GM12878 (cell line): ENCODE measurements at regions of chr17 and their contacts with region 1.

Region 1: GRCh38 chr17:46044286-46044928 is 45.4 kb downstream of the STH start:
- DNase-seq: no peak
- ATAC-seq: peak; percentile 76
- H3K4me3 ChIP-seq: no peak overlapping the region
- H3K27ac ChIP-seq: no peak overlapping the region
- H3K4me1 ChIP-seq: no peaks in the 10 kb centered on the region
- H3K27me3 ChIP-seq: no peaks in the 10 kb centered on the region
- CTCF ChIP-seq: peak; percentile 67 to 80 (median 76)
- EP300 ChIP-seq: no peak
- POLR2A ChIP-seq: no peak
- RAD21 ChIP-seq: peak; percentile 75

Region 2: GRCh38 chr17:45782889-45783592 is 261.4 kb before region 1 on chr17:
- CTCF ChIA-PET with region 1: no interaction called
- POLR2A ChIA-PET with region 1: no interaction called
- RAD21 ChIA-PET with region 1: no interaction called
- SMC1A ChIA-PET with region 1: no interaction called
- in situ Hi-C with region 1: no loop called
- intact Hi-C with region 1: no loop called
- DNase-seq: no peak
- ATAC-seq: no peak
- H3K4me3 ChIP-seq: no peak overlapping the region
- H3K27ac ChIP-seq: no peak overlapping the region
- H3K4me1 ChIP-seq: no peaks in the 10 kb centered on the region
- H3K27me3 ChIP-seq: peaks cover 15 to 18% of the 10 kb centered on the region in 2 experiments
- CTCF ChIP-seq: 0 out of 6 replicates have a peak, but pooled peaks of 1 of the 3 experiments have one; percentile 1
- EP300 ChIP-seq: no peak
- POLR2A ChIP-seq: no peak
- RAD21 ChIP-seq: no peak

Region 3: GRCh38 chr17:45954914-45955313 is 89.5 kb before region 1 on chr17:
- CTCF ChIA-PET with region 1: no interaction called
- POLR2A ChIA-PET with region 1: no interaction called
- RAD21 ChIA-PET with region 1: no interaction called
- SMC1A ChIA-PET with region 1: no interaction called
- in situ Hi-C with region 1: no loop called
- intact Hi-C with region 1: no loop called
- DNase-seq: no peak
- ATAC-seq: no peak
- H3K4me3 ChIP-seq: no peak overlapping the region
- H3K27ac ChIP-seq: no peak overlapping the region
- H3K4me1 ChIP-seq: no peaks in the 10 kb centered on the region
- H3K27me3 ChIP-seq: peaks cover 0 to 3% of the 10 kb centered on the region in 2 experiments; a peak in 3 of 4 replicates
- CTCF ChIP-seq: no peak
- EP300 ChIP-seq: no peak
- POLR2A ChIP-seq: no peak
- RAD21 ChIP-seq: no peak

Region 4: GRCh38 chr17:46002311-46002972 is 42.0 kb before region 1 on chr17:
- CTCF ChIA-PET with region 1: interaction called, 11 read pairs
- POLR2A ChIA-PET with region 1: no interaction called
- RAD21 ChIA-PET with region 1: interaction called, 4 read pairs
- SMC1A ChIA-PET with region 1: interaction called, 12 read pairs
- in situ Hi-C with region 1: no loop called
- intact Hi-C with region 1: loop called (anchors 5 kb)
- DNase-seq: peak; percentile 16
- ATAC-seq: peak; percentile 96
- H3K4me3 ChIP-seq: no peak overlapping the region
- H3K27ac ChIP-seq: no peak overlapping the region
- H3K4me1 ChIP-seq: no peaks in the 10 kb centered on the region
- H3K27me3 ChIP-seq: no peaks in the 10 kb centered on the region
- CTCF ChIP-seq: peak; percentile 86 to 93 (median 87); a peak in 5 of 6 replicates
- EP300 ChIP-seq: no peak
- POLR2A ChIP-seq: no peak
- RAD21 ChIP-seq: peak; percentile 89

Region 5: DNA sequence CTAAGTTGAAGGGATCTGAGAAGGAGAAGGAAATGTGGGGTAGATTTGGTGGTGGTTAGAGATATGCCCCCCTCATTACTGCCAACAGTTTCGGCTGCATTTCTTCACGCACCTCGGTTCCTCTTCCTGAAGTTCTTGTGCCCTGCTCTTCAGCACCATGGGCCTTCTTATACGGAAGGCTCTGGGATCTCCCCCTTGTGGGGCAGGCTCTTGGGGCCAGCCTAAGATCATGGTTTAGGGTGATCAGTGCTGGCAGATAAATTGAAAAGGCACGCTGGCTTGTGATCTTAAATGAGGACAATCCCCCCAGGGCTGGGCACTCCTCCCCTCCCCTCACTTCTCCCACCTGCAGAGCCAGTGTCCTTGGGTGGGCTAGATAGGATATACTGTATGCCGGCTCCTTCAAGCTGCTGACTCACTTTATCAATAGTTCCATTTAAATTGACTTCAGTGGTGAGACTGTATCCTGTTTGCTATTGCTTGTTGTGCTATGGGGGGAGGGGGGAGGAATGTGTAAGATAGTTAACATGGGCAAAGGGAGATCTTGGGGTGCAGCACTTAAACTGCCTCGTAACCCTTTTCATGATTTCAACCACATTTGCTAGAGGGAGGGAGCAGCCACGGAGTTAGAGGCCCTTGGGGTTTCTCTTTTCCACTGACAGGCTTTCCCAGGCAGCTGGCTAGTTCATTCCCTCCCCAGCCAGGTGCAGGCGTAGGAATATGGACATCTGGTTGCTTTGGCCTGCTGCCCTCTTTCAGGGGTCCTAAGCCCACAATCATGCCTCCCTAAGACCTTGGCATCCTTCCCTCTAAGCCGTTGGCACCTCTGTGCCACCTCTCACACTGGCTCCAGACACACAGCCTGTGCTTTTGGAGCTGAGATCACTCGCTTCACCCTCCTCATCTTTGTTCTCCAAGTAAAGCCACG is 17.1 kb before region 1 on chr17:
- CTCF ChIA-PET with region 1: interaction called, 11 read pairs
- POLR2A ChIA-PET with region 1: no interaction called
- RAD21 ChIA-PET with region 1: no interaction called
- SMC1A ChIA-PET with region 1: interaction called, 4 read pairs
- in situ Hi-C with region 1: no loop called
- intact Hi-C with region 1: no loop called
- DNase-seq: no peak
- ATAC-seq: no peak
- H3K4me3 ChIP-seq: no peak overlapping the region
- H3K27ac ChIP-seq: no peak overlapping the region
- H3K4me1 ChIP-seq: peaks cover 11% of the 10 kb centered on the region
- H3K27me3 ChIP-seq: no peaks in the 10 kb centered on the region
- CTCF ChIP-seq: no peak
- EP300 ChIP-seq: no peak
- POLR2A ChIP-seq: peak; percentile 34; the same call in 1 of the 2 replicates
- RAD21 ChIP-seq: no peak

Region 6: GRCh38 chr17:46121841-46122485 is 77.6 kb after region 1 on chr17:
- CTCF ChIA-PET with region 1: interaction called, 13 read pairs
- POLR2A ChIA-PET with region 1: no interaction called
- RAD21 ChIA-PET with region 1: interaction called, 3 read pairs
- SMC1A ChIA-PET with region 1: interaction called, 5 read pairs
- in situ Hi-C with region 1: no loop called
- intact Hi-C with region 1: no loop called
- DNase-seq: peak; percentile 65
- ATAC-seq: peak; percentile 81
- H3K4me3 ChIP-seq: peak overlapping the region; percentile 33
- H3K27ac ChIP-seq: peak overlapping the region; percentile 62
- H3K4me1 ChIP-seq: peaks cover 59% of the 10 kb centered on the region
- H3K27me3 ChIP-seq: no peaks in the 10 kb centered on the region
- CTCF ChIP-seq: no peak
- EP300 ChIP-seq: peak; percentile 33 to 59; a peak in 3 of 4 replicates
- POLR2A ChIP-seq: no peak
- RAD21 ChIP-seq: no peak

Region 7: DNA sequence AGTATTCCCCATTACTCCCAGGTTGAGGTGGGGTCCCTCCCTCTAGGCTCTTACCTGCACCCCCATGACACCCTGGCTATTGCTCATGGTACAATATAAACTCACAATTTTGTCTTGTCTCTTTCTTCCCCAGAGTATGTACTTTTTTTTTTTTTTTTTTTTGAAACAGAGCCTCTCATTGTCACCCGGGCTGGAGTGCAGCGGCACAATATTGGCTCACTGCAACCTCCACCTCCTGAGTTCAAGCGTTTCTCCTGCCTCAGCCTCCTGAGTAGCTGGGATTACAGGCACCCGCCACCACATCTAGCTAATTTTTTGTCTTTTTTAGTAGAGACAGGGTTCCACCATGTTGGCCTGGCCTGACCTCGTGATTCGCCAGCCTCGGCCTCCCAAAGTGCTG is 140.3 kb after region 1 on chr17:
- CTCF ChIA-PET with region 1: interaction called, 120 read pairs
- POLR2A ChIA-PET with region 1: no interaction called
- RAD21 ChIA-PET with region 1: interaction called, 61 read pairs
- SMC1A ChIA-PET with region 1: interaction called, 88 read pairs
- in situ Hi-C with region 1: loop called (anchors 5 kb)
- intact Hi-C with region 1: loop called (anchors 1 kb)
- DNase-seq: no peak
- ATAC-seq: no peak
- H3K4me3 ChIP-seq: no peak overlapping the region
- H3K27ac ChIP-seq: no peak overlapping the region
- H3K4me1 ChIP-seq: peaks cover 37% of the 10 kb centered on the region
- H3K27me3 ChIP-seq: no peaks in the 10 kb centered on the region
- CTCF ChIP-seq: no peak
- EP300 ChIP-seq: no peak
- POLR2A ChIP-seq: no peak
- RAD21 ChIP-seq: no peak

Region 8: DNA sequence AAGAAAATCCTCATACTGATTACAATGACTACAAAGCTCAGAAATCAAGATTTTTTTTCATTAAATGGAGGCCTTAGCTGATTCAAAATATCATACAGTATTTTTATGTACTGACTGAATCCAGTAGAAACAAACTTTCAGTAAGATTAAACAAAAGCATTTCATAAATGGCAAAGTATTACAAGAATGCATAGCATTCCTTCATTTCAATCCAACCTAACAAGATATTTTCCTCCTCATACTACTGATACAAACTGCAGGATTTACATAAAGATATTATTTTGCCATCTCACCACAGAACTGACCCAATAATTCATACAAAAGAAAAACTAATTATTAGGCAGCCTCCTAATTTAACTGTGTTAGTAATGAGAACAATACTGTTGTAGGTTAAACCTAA is 155.0 kb after region 1 on chr17:
- CTCF ChIA-PET with region 1: interaction called, 7 read pairs
- POLR2A ChIA-PET with region 1: no interaction called
- RAD21 ChIA-PET with region 1: no interaction called
- SMC1A ChIA-PET with region 1: interaction called, 11 read pairs
- in situ Hi-C with region 1: no loop called
- intact Hi-C with region 1: no loop called
- DNase-seq: no peak
- ATAC-seq: no peak
- H3K4me3 ChIP-seq: no peak overlapping the region
- H3K27ac ChIP-seq: no peak overlapping the region
- H3K4me1 ChIP-seq: peaks cover 17% of the 10 kb centered on the region
- H3K27me3 ChIP-seq: no peaks in the 10 kb centered on the region
- CTCF ChIP-seq: no peak
- EP300 ChIP-seq: no peak
- POLR2A ChIP-seq: no peak
- RAD21 ChIP-seq: no peak